ENCODE measurements at regions of chr4 and their contacts with region 1.

Region 1: GRCh38 chr4:48779998-48780742 is at the start of gene FRYL:
- DNase-seq: peak; percentile 99 to 100 (median 100)
- ATAC-seq: peak; percentile 94 to 98 (median 98)
- H3K4me3 ChIP-seq: peak within 1 kb of the TSS; percentile 71 to 99 (median 94)
- H3K27ac ChIP-seq: peak within 1 kb of the TSS; percentile 91 to 98 (median 97)
- H3K4me1 ChIP-seq: peaks cover 4 to 42% (median 34%) of the 10 kb centered on the region in 12 donors
- H3K27me3 ChIP-seq: no peaks in the 10 kb centered on the region
- CTCF ChIP-seq: no peak
- POLR2A ChIP-seq: peak in 1 of 2 donors; percentile 76
- total RNA-seq, gene FRYL: 27.0 to 61.3 (median 36.3) TPM

Region 2: DNA sequence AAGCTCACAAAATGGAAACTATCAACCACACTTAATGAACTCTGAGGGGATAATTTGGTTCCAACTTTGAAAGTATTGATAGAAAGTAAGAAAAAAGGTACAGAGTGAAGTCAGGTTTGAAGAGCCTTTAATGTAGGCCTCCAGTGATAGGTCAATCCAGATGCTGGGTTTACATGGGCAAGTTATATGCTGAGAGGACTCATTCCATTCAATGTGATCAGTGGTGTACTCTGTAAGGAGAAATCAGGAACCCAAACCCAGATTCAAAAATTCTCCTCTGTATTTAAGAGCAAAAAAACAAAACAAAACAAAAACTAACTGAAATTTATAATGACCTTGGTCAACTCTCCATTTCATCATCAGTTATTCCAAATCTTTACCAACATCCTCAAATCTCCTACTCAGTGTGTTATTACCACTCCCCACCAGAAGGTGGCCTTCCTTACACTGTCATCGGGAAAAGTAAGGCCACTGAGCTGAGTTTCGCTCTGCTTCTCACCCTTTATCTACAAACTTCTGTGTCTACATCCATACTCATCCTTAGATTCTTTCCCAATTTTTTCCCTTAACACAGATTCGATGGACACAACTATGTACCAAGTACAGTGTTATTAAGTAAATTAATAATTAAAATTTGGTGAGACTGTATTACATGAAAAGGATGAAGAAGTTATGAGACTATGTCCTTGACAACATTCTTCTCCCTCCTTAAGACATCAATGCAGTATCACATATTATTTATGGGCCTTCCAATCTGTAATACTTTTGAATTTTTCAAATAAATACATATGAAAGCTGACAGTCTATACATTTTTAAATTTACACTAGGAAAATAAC is 201.8 kb before region 1 on chr4:
- intact Hi-C with region 1: loop called in 9 of 10 experiments (anchors 1 to 10 kb)
- DNase-seq: peak in 4 of 5 donors; percentile 33 to 60 (median 50)
- ATAC-seq: peak; percentile 61 to 93 (median 88)
- H3K4me3 ChIP-seq: no peak overlapping the region
- H3K27ac ChIP-seq: peak overlapping the region in 1 of 12 donors; percentile 16
- H3K4me1 ChIP-seq: no peaks in the 10 kb centered on the region
- H3K27me3 ChIP-seq: no peaks in the 10 kb centered on the region
- CTCF ChIP-seq: peak; percentile 80 to 94 (median 90)
- POLR2A ChIP-seq: no peak

Region 3: DNA sequence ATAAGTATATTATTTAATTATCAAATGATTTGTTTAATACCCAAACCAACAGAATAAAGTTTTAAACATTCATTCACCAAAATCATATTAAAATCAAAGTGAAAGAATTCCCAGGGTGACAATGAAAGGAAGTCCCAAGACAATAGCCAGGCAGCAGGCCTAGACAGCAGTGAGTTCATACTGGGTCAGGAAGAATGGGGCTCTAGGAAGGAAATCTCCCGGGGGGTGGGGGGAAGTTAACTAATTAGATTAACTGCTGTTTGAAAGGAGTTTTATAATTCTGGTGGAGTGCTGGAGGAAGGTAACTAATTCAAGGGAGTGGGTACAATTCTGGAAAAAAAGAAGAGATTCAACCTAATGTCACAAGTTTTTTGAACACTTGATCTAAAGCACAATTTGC is 186.0 kb before region 1 on chr4:
- intact Hi-C with region 1: loop called in 6 of 10 experiments (anchors 5 to 10 kb)
- DNase-seq: peak in 4 of 5 donors; percentile 42 to 72 (median 56)
- ATAC-seq: peak; percentile 74 to 97 (median 83)
- H3K4me3 ChIP-seq: no peak overlapping the region
- H3K27ac ChIP-seq: peak overlapping the region in 8 of 12 donors; percentile 0 to 66 (median 51)
- H3K4me1 ChIP-seq: peaks cover 0 to 33% (median 8%) of the 10 kb centered on the region in 12 donors
- H3K27me3 ChIP-seq: no peaks in the 10 kb centered on the region
- CTCF ChIP-seq: no peak
- POLR2A ChIP-seq: no peak

Region 4: DNA sequence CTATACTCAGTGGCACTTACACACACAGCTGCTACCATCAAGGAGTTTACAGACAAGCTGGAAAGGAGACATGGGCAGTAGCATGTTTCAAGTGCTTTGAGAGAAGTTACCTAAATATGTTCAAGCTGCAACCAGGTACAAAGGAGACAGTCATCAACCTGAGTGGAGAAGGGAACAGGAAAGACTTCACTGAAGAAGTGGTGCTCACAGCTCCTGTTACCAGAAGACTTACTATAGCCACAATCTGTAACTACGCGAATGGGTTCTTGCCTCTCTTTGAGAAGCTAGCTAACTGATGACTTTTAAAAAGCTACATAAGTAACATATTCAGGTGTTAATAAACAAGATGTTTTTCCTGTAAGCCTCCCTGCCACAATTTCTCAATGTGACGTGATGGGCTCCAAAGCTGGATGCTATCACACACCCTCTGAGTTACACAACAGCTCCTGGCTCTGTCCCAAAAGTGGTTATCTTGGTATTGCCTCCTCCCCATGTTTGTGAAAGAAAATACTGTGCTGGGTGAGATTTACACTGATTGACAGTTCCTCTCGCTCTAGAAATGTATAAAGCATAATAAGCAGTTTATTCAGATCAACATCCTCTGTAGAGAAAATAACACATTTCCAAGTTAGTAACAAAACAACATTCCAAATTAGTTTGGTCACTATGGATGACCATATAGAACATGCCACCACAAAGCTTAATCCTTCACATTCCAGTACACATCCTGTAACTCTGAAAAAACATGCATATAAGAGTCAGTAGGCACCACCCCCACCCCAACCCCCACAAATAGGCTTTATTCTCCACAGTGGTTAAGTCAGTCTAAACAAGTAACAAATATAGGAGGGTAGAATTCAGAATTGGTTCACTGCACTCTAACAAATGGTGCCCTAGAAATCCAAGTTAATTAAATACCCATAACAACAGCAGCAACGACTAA is 81.9 kb before region 1 on chr4:
- intact Hi-C with region 1: loop called in 3 of 10 experiments (anchors 10 kb)
- DNase-seq: peak in 4 of 5 donors; percentile 50 to 69 (median 62)
- ATAC-seq: peak; percentile 74 to 91 (median 88)
- H3K4me3 ChIP-seq: no peak overlapping the region
- H3K27ac ChIP-seq: no peak overlapping the region
- H3K4me1 ChIP-seq: peaks cover 0 to 34% (median 17%) of the 10 kb centered on the region in 12 donors
- H3K27me3 ChIP-seq: no peaks in the 10 kb centered on the region
- CTCF ChIP-seq: no peak
- POLR2A ChIP-seq: no peak

Region 5: GRCh38 chr4:48792348-48793006 is 12.3 kb after region 1 on chr4:
- intact Hi-C with region 1: loop called in 1 of 10 experiments (anchors 2 kb)
- DNase-seq: no peak
- ATAC-seq: peak in 3 of 4 donors; percentile 45 to 59 (median 49)
- H3K4me3 ChIP-seq: no peak overlapping the region
- H3K27ac ChIP-seq: peak overlapping the region in 3 of 12 donors; percentile 9 to 68 (median 12)
- H3K4me1 ChIP-seq: peaks cover 0 to 13% (median 0%) of the 10 kb centered on the region in 12 donors
- H3K27me3 ChIP-seq: no peaks in the 10 kb centered on the region
- CTCF ChIP-seq: no peak
- POLR2A ChIP-seq: no peak

Region 6: DNA sequence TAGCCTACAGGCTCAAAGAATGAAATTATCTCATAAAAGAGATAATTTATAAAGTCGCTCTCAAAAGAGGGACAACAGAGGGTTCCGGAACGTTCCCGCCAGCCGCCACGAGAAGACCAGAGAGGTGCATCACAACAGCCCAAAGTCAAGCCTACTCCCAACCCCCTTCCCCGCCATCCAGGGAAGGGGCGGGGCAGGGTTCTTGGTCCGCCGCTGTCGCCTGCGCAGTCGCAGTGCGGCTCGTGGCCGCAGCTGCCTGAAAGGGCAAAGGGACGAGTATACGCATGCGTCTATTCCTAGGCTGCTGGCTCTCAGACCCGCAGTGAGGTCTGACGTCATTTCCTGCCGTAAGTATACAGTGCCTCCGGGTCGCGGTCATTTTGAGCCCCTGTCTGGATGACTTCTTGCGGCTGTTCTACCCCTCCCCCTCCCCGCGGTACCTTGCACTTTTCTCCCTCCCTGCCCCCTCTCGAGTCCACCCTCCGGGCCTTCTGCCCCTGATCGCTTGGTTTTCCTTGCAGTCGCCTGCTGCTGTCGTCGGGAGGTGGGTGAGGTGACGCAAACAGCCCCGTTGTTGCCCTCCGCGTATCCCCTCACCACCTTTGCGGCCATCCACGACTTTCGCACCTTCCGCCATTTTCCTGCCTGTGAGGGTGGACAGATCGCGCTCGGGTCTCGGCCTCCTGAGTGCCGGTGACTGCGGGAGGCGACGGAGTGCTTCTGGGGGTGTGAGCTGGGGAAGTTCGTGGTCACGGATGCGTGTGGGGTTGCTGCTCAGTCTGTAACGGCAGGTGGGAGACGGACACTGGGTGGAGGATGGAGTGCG is 50.7 kb after region 1 on chr4 and contains the start of gene OCIAD1:
- intact Hi-C with region 1: loop called in 9 of 10 experiments (anchors 1 to 10 kb)
- DNase-seq: peak; percentile 96 to 99 (median 98)
- ATAC-seq: peak; percentile 100
- H3K4me3 ChIP-seq: peak within 1 kb of the TSS; percentile 68 to 96 (median 80)
- H3K27ac ChIP-seq: peak within 1 kb of the TSS; percentile 88 to 97 (median 95)
- H3K4me1 ChIP-seq: peaks cover 0 to 26% (median 16%) of the 10 kb centered on the region in 12 donors
- H3K27me3 ChIP-seq: no peaks in the 10 kb centered on the region
- CTCF ChIP-seq: no peak
- POLR2A ChIP-seq: peak in 1 of 2 donors; percentile 65
- total RNA-seq, gene OCIAD1: 102 to 175 (median 137) TPM

Region 7: DNA sequence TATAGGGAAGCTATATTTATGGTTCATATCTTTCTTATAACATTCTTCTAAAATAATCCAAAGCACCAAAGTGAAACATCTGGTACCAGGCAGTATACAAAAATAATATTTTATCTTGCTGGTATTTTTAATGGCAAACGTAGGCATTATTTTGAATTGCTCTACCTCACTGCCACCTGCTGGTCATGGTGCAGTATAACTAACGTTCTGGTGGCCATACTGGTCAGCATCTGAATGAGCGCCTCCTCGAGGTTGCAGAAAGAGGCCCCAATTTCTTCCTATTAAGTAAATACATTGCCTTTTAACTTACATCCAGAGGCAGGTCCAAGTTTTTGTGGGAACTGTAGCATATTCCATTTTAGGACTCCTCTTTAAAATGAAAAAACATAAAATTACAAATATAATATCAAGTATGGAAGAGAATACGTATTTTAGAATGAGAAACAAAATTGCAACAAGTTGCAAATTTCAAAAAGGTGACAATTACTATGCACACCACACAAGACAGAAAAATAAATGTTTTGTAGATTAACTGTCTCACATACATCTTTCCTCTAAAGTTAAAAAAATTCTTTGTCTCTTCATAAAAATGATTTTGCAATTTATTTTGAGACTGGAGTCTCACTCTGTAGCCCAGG is 183.0 kb after region 1 on chr4:
- intact Hi-C with region 1: loop called in 2 of 10 experiments (anchors 10 kb)
- DNase-seq: peak in 4 of 5 donors; percentile 49 to 70 (median 68)
- ATAC-seq: peak in 3 of 4 donors; percentile 77 to 89 (median 82)
- H3K4me3 ChIP-seq: no peak overlapping the region
- H3K27ac ChIP-seq: no peak overlapping the region
- H3K4me1 ChIP-seq: no peaks in the 10 kb centered on the region
- H3K27me3 ChIP-seq: no peaks in the 10 kb centered on the region
- CTCF ChIP-seq: peak; percentile 90 to 99 (median 95)
- POLR2A ChIP-seq: no peak

Measured in heart left ventricle (tissue), 16 donors.